CD8-positive, alpha-beta memory T cell (primary cell): ENCODE measurements at regions of chr10 and their contacts with region 1.

Region 1: DNA sequence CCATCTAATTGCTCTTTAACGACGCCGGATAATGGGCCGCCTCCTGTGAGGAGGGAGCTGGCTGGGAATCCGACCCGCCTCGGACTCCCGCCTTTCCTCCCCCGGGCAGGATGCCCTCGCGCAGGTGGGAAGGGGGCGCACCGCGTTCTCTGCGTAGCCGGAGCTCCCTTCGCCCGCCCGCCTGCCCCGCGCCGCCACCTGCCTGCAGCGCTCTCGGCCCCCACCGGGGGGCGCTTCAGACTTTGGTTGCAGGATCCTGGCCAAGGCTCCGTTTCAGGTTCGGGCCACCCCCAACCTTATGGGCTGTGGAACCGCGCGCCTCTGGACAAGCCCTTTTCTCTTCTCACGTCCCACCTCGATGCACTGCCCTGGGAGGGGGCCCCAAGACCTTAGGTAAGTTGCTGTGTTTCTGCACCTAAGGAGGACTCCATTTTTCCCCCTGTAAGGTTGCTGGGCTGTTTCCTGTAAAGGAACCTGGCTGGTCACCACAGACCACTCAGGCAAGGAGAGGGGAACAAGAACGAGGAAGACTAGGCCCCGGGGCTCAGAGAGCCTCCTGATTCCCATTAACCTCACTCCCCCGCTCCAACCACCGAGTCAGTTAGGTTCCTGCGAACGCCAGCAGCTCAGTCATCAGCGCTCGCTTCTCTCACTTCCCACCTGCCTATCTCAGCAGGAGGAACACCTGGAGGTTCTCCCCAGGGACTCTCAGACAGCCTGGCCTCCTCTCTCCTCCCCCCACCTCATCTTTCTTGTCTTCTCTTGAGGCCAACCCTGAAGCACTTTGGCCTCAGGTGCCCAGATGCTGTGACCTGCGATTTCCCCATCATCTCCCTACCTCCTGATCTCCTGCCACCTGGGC is 11.3 kb upstream of the KAZALD1 start:
- DNase-seq: peak; percentile 70 to 82 (median 76)
- H3K4me3 ChIP-seq: no peak overlapping the region
- H3K4me3 Mint-ChIP-seq: peak overlapping the region in 5 of 7 donors; percentile 9 to 62 (median 36)
- H3K27ac ChIP-seq: no peak overlapping the region
- H3K27ac Mint-ChIP-seq: peak overlapping the region in 1 of 8 donors; percentile 5
- H3K4me1 ChIP-seq: peaks cover 13% of the 10 kb centered on the region
- H3K4me1 Mint-ChIP-seq: peaks cover 12 to 21% (median 19%) of the 10 kb centered on the region in 3 donors
- H3K27me3 ChIP-seq: peaks cover 25% of the 10 kb centered on the region
- H3K27me3 Mint-ChIP-seq: peaks cover 36 to 52% of the 10 kb centered on the region in 2 donors

Region 2: DNA sequence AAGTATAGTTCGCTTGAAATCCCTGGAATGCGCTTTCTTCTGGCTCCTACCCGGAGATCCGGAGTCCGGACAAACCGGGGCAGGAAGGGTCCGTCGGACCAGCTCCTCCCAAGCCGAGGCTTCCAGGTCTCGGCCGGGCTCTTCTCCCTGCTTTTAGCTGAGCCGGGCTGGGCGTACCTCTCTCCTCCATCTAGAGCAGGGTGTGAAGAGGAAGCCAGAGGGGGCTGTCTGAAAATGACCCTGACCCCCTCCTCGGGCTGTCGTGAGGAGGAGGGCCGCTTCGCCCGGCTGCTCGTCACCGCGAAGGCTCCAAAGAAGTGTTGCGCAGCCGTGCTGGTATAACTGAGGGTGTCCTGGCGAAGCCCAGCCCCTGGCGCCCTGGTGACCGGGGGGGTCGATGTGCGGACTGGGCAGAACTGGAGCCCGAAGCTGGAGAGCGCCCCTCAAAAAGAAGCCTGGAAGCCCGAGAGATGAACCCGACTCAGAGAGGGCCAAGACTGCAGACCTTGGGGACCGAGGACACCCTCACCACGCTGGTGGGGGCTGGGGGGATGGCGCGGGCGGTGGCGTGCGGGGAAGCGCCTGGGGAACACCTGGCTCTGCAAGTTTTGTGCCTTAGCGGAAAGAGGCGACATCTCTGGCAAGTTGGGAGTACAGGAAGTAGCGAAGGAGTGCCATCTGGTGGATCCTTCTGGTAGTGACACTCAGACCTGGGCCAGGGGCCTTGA is 17.1 kb after region 1 on chr10:
- CTCF ChIA-PET with region 1: interaction called, 83 read pairs
- POLR2A ChIA-PET with region 1: interaction called, 3 read pairs
- DNase-seq: peak; percentile 63 to 80 (median 69)
- H3K4me3 ChIP-seq: peak overlapping the region; percentile 65
- H3K4me3 Mint-ChIP-seq: peak overlapping the region; percentile 90 to 97 (median 92)
- H3K27ac ChIP-seq: peak overlapping the region; percentile 43
- H3K27ac Mint-ChIP-seq: peak overlapping the region in 3 of 8 donors; percentile 28 to 86 (median 42)
- H3K4me1 ChIP-seq: peaks cover 28% of the 10 kb centered on the region
- H3K4me1 Mint-ChIP-seq: peaks cover 10 to 35% (median 15%) of the 10 kb centered on the region in 3 donors
- H3K27me3 ChIP-seq: peaks cover 46% of the 10 kb centered on the region
- H3K27me3 Mint-ChIP-seq: peaks cover 37 to 52% of the 10 kb centered on the region in 2 donors

Region 3: DNA sequence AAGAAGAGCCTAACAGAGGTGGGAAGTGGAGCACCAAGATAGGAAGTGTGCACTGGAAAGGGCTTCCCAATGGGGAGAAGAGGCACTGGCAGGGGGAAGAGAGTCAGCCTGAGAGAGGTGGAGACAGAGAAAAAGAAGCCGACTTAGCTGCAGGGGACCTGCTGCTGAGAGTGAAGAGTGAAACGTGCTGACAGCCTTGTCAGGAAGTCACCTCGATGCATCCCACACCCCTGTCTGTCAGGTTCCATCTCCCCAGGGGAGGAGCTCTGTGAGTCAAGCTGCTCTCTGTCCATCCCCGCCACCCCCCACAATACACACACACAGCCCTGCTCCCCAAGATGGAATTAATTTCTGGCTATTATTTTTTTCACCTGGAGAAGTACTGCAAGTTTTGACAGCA is 25.3 kb after region 1 on chr10:
- CTCF ChIA-PET with region 1: interaction called, 10 read pairs
- POLR2A ChIA-PET with region 1: no interaction called
- DNase-seq: no peak
- H3K4me3 ChIP-seq: no peak overlapping the region
- H3K4me3 Mint-ChIP-seq: no peak overlapping the region
- H3K27ac ChIP-seq: no peak overlapping the region
- H3K27ac Mint-ChIP-seq: no peak overlapping the region
- H3K4me1 ChIP-seq: no peaks in the 10 kb centered on the region
- H3K4me1 Mint-ChIP-seq: no peaks in the 10 kb centered on the region
- H3K27me3 ChIP-seq: no peaks in the 10 kb centered on the region
- H3K27me3 Mint-ChIP-seq: peaks cover 26 to 75% of the 10 kb centered on the region in 2 donors